ENCODE measurements at regions of chr1 and their contacts with region 1.

Region 1: GRCh38 chr1:45499415-45499769 is 481 bp downstream of the CCDC163 start:
- DNase-seq: no peak
- ATAC-seq: no peak
- H3K4me3 ChIP-seq: peak overlapping the region; percentile 68 to 89 (median 74)
- H3K4me3 Mint-ChIP-seq: peak overlapping the region; percentile 96
- H3K27ac ChIP-seq: peak overlapping the region; percentile 52 to 67
- H3K27ac Mint-ChIP-seq: peak overlapping the region; percentile 80
- H3K4me1 ChIP-seq: peaks cover 12 to 22% of the 10 kb centered on the region in 2 donors
- H3K4me1 Mint-ChIP-seq: peaks cover 28% of the 10 kb centered on the region
- H3K27me3 ChIP-seq: no peaks in the 10 kb centered on the region
- H3K27me3 Mint-ChIP-seq: no peaks in the 10 kb centered on the region
- CTCF ChIP-seq: no peak

Region 2: DNA sequence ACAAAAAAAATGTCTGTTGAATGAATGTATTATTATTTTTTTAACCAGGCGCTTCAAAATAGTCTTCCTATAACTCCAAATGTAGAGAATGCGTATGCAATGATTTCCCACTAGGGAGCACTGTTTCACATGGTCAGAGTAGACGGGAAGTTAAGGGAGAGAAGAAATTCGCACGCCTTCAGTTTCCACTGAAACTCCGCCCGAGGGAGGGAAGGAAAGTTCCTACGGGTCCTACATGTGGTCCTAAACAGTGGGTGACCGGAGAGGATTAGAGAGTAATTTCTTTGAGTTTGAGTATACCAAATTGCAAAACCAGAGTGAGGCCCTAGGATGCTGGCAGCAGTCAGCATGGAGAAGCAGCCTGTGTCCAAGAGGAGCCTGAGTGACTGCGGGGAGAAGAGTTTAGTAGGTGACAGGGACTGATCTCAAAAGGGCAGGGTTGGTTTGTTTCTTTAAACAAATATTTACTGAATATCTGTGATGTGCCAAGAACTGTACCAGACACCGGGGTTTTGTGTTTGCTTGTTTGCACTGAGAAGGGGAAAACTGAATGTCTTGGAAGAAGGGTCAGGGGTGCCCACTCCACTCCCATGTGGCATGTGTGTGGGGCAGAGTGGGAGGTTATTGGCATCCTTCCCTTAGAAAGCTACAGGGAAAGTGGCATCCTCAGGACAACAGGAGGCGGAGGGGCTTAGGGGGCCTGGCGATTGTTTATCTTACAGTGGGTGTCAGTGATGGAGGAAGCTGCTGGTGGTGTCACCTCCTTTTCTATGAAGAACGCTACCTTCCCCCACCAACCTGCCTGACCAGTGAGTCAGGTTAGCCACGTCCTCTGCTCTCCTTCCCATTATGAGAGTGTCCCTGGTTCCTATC is 791.2 kb before region 1 on chr1:
- CTCF ChIA-PET with region 1: no interaction called
- POLR2A ChIA-PET with region 1: interaction called, 10 read pairs
- intact Hi-C with region 1: no loop called
- DNase-seq: peak; percentile 76
- ATAC-seq: peak; percentile 76
- H3K4me3 ChIP-seq: peak overlapping the region in 4 of 5 experiments; percentile 9 to 26 (median 14)
- H3K4me3 Mint-ChIP-seq: peak overlapping the region; percentile 59
- H3K27ac ChIP-seq: no peak overlapping the region
- H3K27ac Mint-ChIP-seq: peak overlapping the region; percentile 54
- H3K4me1 ChIP-seq: peaks cover 27 to 30% of the 10 kb centered on the region in 2 donors
- H3K4me1 Mint-ChIP-seq: peaks cover 25% of the 10 kb centered on the region
- H3K27me3 ChIP-seq: no peaks in the 10 kb centered on the region
- H3K27me3 Mint-ChIP-seq: no peaks in the 10 kb centered on the region
- CTCF ChIP-seq: peak; percentile 85

Region 3: GRCh38 chr1:45339789-45340570 is 159.4 kb before region 1 on chr1 and contains the starts of genes MUTYH and TOE1:
- CTCF ChIA-PET with region 1: interaction called, 74 read pairs
- POLR2A ChIA-PET with region 1: interaction called, 11 read pairs
- intact Hi-C with region 1: loop called (anchors 1 kb)
- DNase-seq: peak; percentile 92
- ATAC-seq: peak; percentile 88
- H3K4me3 ChIP-seq: peak within 1 kb of the TSS; percentile 83 to 97 (median 86)
- H3K4me3 Mint-ChIP-seq: peak within 1 kb of the TSS; percentile 91
- H3K27ac ChIP-seq: peak within 1 kb of the TSS; percentile 96
- H3K27ac Mint-ChIP-seq: peak within 1 kb of the TSS; percentile 100
- H3K4me1 ChIP-seq: peaks cover 20 to 33% of the 10 kb centered on the region in 2 donors
- H3K4me1 Mint-ChIP-seq: peaks cover 38% of the 10 kb centered on the region
- H3K27me3 ChIP-seq: no peaks in the 10 kb centered on the region
- H3K27me3 Mint-ChIP-seq: no peaks in the 10 kb centered on the region
- CTCF ChIP-seq: no peak
- total RNA-seq, gene MUTYH: 68.1 and 68.5 TPM in 2 replicates
- total RNA-seq, gene TOE1: 21.9 and 24.7 TPM in 2 replicates

Region 4: DNA sequence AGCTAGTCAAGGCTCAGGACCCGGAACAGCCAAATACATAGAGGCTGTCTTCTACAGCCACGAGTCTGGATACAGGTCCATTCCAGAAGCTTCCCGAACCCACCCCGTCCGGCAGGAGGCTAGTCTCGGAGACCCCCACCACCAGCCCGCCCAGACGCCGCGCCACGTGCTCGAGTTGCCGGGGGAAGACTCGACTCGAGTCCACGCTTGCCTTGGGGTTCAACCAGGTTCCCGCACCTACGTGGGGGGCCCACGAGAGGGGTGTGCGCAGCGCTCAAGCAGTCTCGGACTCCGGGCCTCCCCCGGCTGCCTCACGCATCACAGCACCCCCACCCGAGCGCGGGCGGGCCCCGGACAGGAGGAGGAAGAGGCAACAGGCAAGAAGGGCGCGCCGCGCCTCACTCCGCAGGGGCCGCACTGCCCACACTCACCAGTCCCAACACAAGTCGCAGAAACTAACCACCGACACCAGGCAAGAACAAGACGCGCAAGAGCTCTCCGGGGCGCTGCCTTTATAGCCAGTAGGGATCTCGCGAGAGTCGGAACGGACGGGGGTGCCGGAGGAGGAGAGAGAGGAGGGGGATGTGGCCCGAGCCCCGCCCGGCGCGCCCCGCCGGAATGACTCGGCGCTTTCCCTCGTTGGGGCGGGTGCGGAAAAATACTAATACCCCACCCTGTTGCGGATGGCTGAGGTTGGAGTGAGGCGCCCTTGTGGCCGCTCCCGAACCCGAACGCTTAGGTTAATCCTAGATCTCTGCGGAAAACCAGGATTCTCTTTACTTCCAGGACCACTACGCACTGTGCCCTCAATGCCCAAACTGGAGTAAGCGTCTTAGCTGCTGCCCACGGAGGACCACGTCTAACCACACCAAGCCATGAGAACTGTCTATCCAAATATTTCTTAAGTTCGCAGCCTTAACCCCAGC is 22.3 kb after region 1 on chr1 and contains the start of gene PRDX1:
- CTCF ChIA-PET with region 1: interaction called, 7 read pairs
- POLR2A ChIA-PET with region 1: interaction called, 6 read pairs
- intact Hi-C with region 1: loop called (anchors 2 kb)
- DNase-seq: peak; percentile 98
- ATAC-seq: peak; percentile 86
- H3K4me3 ChIP-seq: peak within 1 kb of the TSS; percentile 75 to 97 (median 82)
- H3K4me3 Mint-ChIP-seq: peak within 1 kb of the TSS; percentile 95
- H3K27ac ChIP-seq: peak within 1 kb of the TSS; percentile 80 to 82
- H3K27ac Mint-ChIP-seq: peak within 1 kb of the TSS; percentile 98
- H3K4me1 ChIP-seq: peaks cover 16 to 31% of the 10 kb centered on the region in 2 donors
- H3K4me1 Mint-ChIP-seq: peaks cover 34% of the 10 kb centered on the region
- H3K27me3 ChIP-seq: no peaks in the 10 kb centered on the region
- H3K27me3 Mint-ChIP-seq: no peaks in the 10 kb centered on the region
- CTCF ChIP-seq: no peak
- total RNA-seq, gene PRDX1: 96.5 and 104 TPM in 2 replicates

Region 5: GRCh38 chr1:45569962-45570581 is 70.7 kb after region 1 on chr1:
- CTCF ChIA-PET with region 1: interaction called, 37 read pairs
- POLR2A ChIA-PET with region 1: no interaction called
- intact Hi-C with region 1: no loop called
- DNase-seq: peak; percentile 85
- ATAC-seq: peak; percentile 97
- H3K4me3 ChIP-seq: no peak overlapping the region
- H3K4me3 Mint-ChIP-seq: no peak overlapping the region
- H3K27ac ChIP-seq: peak overlapping the region in 1 of 2 donors; percentile 0
- H3K27ac Mint-ChIP-seq: peak overlapping the region; percentile 56
- H3K4me1 ChIP-seq: no peaks in the 10 kb centered on the region
- H3K4me1 Mint-ChIP-seq: peaks cover 2% of the 10 kb centered on the region
- H3K27me3 ChIP-seq: no peaks in the 10 kb centered on the region
- H3K27me3 Mint-ChIP-seq: no peaks in the 10 kb centered on the region
- CTCF ChIP-seq: peak; percentile 99